HepG2 (cell line): ENCODE measurements at regions of chr9 and their contacts with region 1.

Region 1: DNA sequence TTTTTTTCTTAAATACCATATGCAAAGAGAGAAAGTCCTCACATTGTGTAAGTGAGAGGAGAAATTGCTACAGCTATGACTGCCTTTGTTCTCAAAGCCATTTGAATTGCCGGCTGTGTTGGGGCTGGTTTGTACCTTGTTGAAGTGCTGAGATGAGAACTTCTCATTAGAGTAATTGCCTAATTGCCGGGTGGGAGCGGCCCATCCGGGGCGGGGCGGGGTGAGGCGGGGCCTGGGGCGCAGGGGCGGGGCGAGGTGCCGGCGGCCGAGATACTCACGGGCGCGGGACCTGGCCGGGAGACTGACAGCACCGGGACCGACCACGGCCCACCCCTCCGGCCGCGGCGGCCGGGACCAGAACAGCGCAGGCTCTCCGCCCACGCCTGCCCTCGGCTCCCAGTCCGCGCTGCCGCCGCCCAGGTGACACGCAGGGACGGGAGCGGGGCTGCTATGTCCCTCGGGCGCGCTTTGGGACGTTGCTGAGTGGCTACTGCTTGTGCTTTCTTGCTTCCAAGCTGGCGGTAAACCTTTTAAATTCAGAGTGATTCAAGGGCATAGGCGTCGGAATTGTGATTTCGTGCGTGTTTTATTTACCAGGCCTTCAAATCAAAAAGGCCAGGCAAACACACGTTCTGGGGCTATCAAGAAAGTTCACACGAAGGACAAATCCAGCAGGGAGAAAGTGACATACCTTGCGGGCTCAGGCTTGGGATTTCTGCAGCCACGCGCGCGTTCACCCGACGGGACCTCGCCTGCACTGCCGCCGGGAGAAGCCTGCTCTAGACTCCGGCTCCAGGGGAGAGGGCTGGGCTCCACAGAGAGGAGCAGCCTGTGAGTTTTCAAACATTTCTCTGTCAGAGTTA is 269.1 kb downstream of the FANCC start:
- DNase-seq: peak; percentile 72
- ATAC-seq: peak; percentile 91
- H3K4me3 ChIP-seq: peak overlapping the region; percentile 60 to 77 (median 69)
- H3K27ac ChIP-seq: peak overlapping the region; percentile 88
- H3K4me1 ChIP-seq: peaks cover 70% of the 10 kb centered on the region
- H3K27me3 ChIP-seq: no peaks in the 10 kb centered on the region
- CTCF ChIP-seq: no peak
- EP300 ChIP-seq: no peak
- POLR2A ChIP-seq: peak; percentile 24 to 35; a peak in 2 of 4 replicates
- RAD21 ChIP-seq: peak; percentile 18; the same call in 1 of the 2 replicates

Region 2: DNA sequence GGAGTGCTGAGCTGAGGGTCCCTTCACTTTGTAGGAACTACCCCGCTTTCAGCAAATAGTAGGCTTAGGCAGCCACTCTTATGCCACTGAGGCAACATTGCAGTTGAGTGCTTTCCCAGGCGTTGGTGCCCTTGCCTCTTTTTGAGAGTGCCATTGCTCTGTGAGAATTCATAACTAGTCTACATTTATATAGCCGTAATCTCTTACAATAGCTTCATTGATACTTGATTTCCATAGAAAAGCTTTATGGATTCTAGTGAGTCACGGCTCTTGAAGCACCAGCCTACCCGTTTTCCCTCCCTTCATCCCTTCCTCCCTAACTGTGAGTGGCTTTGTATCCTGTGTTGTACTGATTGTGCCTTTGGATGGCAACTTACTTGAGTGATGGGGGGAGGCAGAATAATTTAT is 38.0 kb before region 1 on chr9:
- CTCF ChIA-PET with region 1: no interaction called
- POLR2A ChIA-PET with region 1: interaction called, 4 read pairs
- in situ Hi-C with region 1: no loop called
- intact Hi-C with region 1: loop called (anchors 5 kb)
- DNase-seq: no peak
- ATAC-seq: no peak
- H3K4me3 ChIP-seq: no peak overlapping the region
- H3K27ac ChIP-seq: no peak overlapping the region
- H3K4me1 ChIP-seq: peaks cover 75% of the 10 kb centered on the region
- H3K27me3 ChIP-seq: no peaks in the 10 kb centered on the region
- CTCF ChIP-seq: no peak
- EP300 ChIP-seq: no peak
- POLR2A ChIP-seq: peak in 1 of 2 experiments; percentile 44; a peak in 1 of 4 replicates
- RAD21 ChIP-seq: no peak

Region 3: GRCh38 chr9:95031711-95032461 is 16.6 kb before region 1 on chr9:
- CTCF ChIA-PET with region 1: no interaction called
- POLR2A ChIA-PET with region 1: interaction called, 16 read pairs
- in situ Hi-C with region 1: no loop called
- intact Hi-C with region 1: loop called (anchors 2 kb)
- DNase-seq: peak; percentile 98
- ATAC-seq: peak; percentile 82
- H3K4me3 ChIP-seq: peak overlapping the region in 1 of 3 experiments; percentile 48; a peak in 2 of 6 replicates
- H3K27ac ChIP-seq: peak overlapping the region; percentile 85
- H3K4me1 ChIP-seq: peaks cover 76% of the 10 kb centered on the region
- H3K27me3 ChIP-seq: no peaks in the 10 kb centered on the region
- CTCF ChIP-seq: no peak
- EP300 ChIP-seq: peak in 1 of 2 experiments; percentile 97; a peak in 3 of 4 replicates
- POLR2A ChIP-seq: peak; percentile 16 to 21; a peak in 2 of 4 replicates
- RAD21 ChIP-seq: no peak